Heart left ventricle (tissue), 16 donors: ENCODE measurements at regions of chr4 and their contacts with region 1.

Region 1: DNA sequence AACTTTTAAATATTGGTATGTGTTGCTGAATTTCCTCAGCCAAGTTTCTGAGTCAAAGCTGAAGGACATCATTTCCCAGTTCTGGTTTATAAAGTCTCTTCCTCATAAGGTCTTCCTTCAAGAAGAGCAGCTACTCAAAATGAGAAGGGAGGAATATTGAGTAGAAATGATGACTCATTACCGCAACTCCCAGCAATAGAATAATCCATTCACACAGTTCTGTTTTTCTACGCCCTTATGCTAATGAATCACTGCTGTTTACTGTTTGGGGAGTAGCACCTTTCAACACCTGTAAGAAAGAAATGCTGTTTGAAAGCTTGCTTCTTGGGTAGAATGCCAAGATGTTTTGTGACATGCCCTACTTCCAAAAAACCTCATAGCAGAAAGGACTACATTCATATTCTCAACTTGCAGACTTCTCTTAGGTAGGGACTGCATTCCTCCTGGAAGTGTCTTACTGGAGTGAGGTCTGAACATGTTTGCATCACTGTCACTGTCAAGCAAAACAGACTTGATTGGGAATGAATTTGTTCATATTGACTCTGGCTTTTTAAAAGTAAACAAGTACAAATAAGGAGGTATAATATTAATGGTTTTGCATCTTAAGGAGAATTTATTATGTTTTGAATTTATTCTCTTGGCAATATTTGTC is 147.2 kb upstream of the BANK1 start:
- DNase-seq: no peak
- ATAC-seq: no peak
- H3K4me3 ChIP-seq: no peak overlapping the region
- H3K27ac ChIP-seq: no peak overlapping the region
- H3K4me1 ChIP-seq: no peaks in the 10 kb centered on the region
- H3K27me3 ChIP-seq: no peaks in the 10 kb centered on the region
- CTCF ChIP-seq: no peak
- POLR2A ChIP-seq: no peak

Region 2: GRCh38 chr4:101191302-101192098 is 451.8 kb before region 1 on chr4:
- intact Hi-C with region 1: no loop called
- DNase-seq: peak; percentile 69 to 91 (median 85)
- ATAC-seq: peak; percentile 99
- H3K4me3 ChIP-seq: peak overlapping the region in 2 of 12 donors; percentile 3 to 4
- H3K27ac ChIP-seq: peak overlapping the region; percentile 16 to 79 (median 67)
- H3K4me1 ChIP-seq: peaks cover 5 to 34% (median 21%) of the 10 kb centered on the region in 12 donors
- H3K27me3 ChIP-seq: no peaks in the 10 kb centered on the region
- CTCF ChIP-seq: no peak
- POLR2A ChIP-seq: no peak

Region 3: GRCh38 chr4:101500742-101501141 is 142.6 kb before region 1 on chr4:
- intact Hi-C with region 1: no loop called
- DNase-seq: no peak
- ATAC-seq: no peak
- H3K4me3 ChIP-seq: no peak overlapping the region
- H3K27ac ChIP-seq: no peak overlapping the region
- H3K4me1 ChIP-seq: no peaks in the 10 kb centered on the region
- H3K27me3 ChIP-seq: no peaks in the 10 kb centered on the region
- CTCF ChIP-seq: no peak
- POLR2A ChIP-seq: no peak

Region 4: GRCh38 chr4:101670897-101671296 is 27.6 kb after region 1 on chr4:
- intact Hi-C with region 1: loop called in 1 of 10 experiments (anchors 2 kb)
- DNase-seq: no peak
- ATAC-seq: no peak
- H3K4me3 ChIP-seq: no peak overlapping the region
- H3K27ac ChIP-seq: no peak overlapping the region
- H3K4me1 ChIP-seq: peaks cover 0 to 6% (median 0%) of the 10 kb centered on the region in 12 donors
- H3K27me3 ChIP-seq: no peaks in the 10 kb centered on the region
- CTCF ChIP-seq: no peak
- POLR2A ChIP-seq: no peak